ENCODE measurements at regions of chr1 and their contacts with region 1.

Region 1: DNA sequence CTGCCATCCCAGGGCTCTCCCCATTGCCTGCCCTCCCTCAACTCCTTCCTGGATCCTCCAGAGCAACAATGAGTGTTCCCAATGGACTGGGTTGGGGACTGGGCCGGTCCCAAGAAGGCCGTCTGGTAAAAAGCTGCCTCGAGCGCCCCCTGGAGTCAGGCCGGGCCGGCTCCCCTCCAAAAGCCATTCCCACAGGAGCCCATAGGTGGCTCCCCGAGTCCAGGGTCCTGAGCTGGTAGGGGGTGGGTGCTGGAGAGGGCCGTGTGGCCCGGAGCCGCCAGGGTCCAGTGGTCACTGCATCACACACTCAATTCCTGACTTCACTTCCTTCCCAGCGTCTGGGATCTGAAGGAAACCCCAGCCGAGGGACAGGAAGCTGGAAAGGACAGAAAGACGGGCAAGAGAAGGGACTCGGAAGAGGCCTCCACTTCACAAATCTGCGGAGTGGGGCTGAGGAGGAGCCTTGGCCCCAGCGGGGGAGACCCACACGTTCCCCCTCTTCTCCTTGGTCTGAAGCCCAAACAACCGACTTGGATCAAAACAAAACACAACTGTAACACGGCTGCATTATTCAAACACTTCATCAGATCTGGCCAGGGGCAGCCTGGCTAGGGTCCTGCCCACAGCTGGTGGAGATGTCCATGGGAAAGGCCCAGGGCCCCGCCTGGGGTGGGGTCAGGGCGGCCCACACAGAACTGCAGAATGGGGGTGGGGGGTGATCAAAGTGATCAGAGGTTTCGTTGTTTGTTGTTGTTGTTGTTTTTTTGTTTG is 10.9 kb upstream of the ALDH4A1 start:
- DNase-seq: peak; percentile 46 to 84 (median 73)
- ATAC-seq: peak; percentile 89
- H3K4me3 ChIP-seq: no peak overlapping the region
- H3K4me3 Mint-ChIP-seq: no peak overlapping the region
- H3K27ac ChIP-seq: no peak overlapping the region
- H3K27ac Mint-ChIP-seq: peak overlapping the region; percentile 22
- H3K4me1 ChIP-seq: peaks cover 5% of the 10 kb centered on the region
- H3K4me1 Mint-ChIP-seq: peaks cover 8% of the 10 kb centered on the region
- H3K27me3 ChIP-seq: no peaks in the 10 kb centered on the region
- H3K27me3 Mint-ChIP-seq: no peaks in the 10 kb centered on the region
- CTCF ChIP-seq: peak; percentile 92

Region 2: GRCh38 chr1:18854331-18855025 is 58.8 kb before region 1 on chr1:
- CTCF ChIA-PET with region 1: no interaction called
- POLR2A ChIA-PET with region 1: no interaction called
- intact Hi-C with region 1: no loop called
- DNase-seq: no peak
- ATAC-seq: no peak
- H3K4me3 ChIP-seq: no peak overlapping the region
- H3K4me3 Mint-ChIP-seq: no peak overlapping the region
- H3K27ac ChIP-seq: no peak overlapping the region
- H3K27ac Mint-ChIP-seq: no peak overlapping the region
- H3K4me1 ChIP-seq: no peaks in the 10 kb centered on the region
- H3K4me1 Mint-ChIP-seq: no peaks in the 10 kb centered on the region
- H3K27me3 ChIP-seq: no peaks in the 10 kb centered on the region
- H3K27me3 Mint-ChIP-seq: peaks cover 10% of the 10 kb centered on the region
- CTCF ChIP-seq: no peak

Region 3: GRCh38 chr1:18883636-18884418 is 29.4 kb before region 1 on chr1:
- CTCF ChIA-PET with region 1: interaction called, 116 read pairs
- POLR2A ChIA-PET with region 1: no interaction called
- intact Hi-C with region 1: no loop called
- DNase-seq: peak; percentile 51 to 82 (median 76)
- ATAC-seq: peak; percentile 97
- H3K4me3 ChIP-seq: no peak overlapping the region
- H3K4me3 Mint-ChIP-seq: no peak overlapping the region
- H3K27ac ChIP-seq: no peak overlapping the region
- H3K27ac Mint-ChIP-seq: no peak overlapping the region
- H3K4me1 ChIP-seq: no peaks in the 10 kb centered on the region
- H3K4me1 Mint-ChIP-seq: no peaks in the 10 kb centered on the region
- H3K27me3 ChIP-seq: no peaks in the 10 kb centered on the region
- H3K27me3 Mint-ChIP-seq: no peaks in the 10 kb centered on the region
- CTCF ChIP-seq: peak; percentile 86

Region 4: DNA sequence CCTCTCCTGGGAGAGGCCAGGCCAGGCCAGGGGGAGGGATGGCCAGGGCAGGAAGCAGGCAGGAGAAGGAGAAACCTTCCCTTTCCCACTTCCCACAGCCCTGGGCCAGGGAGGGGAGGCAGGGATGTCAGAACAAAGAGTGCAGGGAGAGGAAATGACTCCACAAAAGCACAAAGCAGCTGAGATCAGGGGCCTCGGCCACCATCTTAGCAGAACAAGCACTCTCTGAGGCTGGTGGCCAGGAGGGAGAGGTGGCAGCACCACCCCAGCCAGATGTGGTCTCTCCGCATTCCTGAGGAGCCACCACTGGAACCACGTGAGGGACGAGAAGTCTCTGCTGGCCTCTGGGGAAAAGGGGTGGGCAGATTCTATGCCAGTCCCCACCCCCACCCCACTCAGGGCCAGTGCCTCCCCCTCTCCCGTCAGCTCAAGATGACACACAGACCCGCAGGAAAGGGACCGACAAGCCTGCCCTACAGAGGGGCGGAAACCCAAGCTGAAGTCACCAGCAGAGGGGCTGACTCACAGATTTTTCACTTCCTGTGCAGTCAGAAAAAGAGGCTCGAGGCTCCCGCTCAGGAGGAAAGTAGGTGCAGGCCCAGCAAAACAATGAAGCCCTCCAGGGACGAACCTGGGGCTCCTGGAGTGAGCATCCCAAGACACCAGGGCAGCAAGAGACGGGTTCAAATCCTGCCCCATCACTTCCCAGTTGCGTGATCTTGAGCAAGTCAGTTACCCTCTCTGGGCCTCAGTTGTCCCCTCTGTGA is 13.2 kb after region 1 on chr1:
- CTCF ChIA-PET with region 1: interaction called, 82 read pairs
- POLR2A ChIA-PET with region 1: interaction called, 6 read pairs
- intact Hi-C with region 1: loop called in 1 of 2 experiments (anchors 2 kb)
- DNase-seq: peak; percentile 59 to 93 (median 84)
- ATAC-seq: peak; percentile 83
- H3K4me3 ChIP-seq: peak overlapping the region; percentile 52 to 63
- H3K4me3 Mint-ChIP-seq: peak overlapping the region; percentile 75
- H3K27ac ChIP-seq: peak overlapping the region; percentile 64 to 82
- H3K27ac Mint-ChIP-seq: peak overlapping the region; percentile 96
- H3K4me1 ChIP-seq: peaks cover 88% of the 10 kb centered on the region
- H3K4me1 Mint-ChIP-seq: peaks cover 85% of the 10 kb centered on the region
- H3K27me3 ChIP-seq: no peaks in the 10 kb centered on the region
- H3K27me3 Mint-ChIP-seq: no peaks in the 10 kb centered on the region
- CTCF ChIP-seq: no peak

Region 5: DNA sequence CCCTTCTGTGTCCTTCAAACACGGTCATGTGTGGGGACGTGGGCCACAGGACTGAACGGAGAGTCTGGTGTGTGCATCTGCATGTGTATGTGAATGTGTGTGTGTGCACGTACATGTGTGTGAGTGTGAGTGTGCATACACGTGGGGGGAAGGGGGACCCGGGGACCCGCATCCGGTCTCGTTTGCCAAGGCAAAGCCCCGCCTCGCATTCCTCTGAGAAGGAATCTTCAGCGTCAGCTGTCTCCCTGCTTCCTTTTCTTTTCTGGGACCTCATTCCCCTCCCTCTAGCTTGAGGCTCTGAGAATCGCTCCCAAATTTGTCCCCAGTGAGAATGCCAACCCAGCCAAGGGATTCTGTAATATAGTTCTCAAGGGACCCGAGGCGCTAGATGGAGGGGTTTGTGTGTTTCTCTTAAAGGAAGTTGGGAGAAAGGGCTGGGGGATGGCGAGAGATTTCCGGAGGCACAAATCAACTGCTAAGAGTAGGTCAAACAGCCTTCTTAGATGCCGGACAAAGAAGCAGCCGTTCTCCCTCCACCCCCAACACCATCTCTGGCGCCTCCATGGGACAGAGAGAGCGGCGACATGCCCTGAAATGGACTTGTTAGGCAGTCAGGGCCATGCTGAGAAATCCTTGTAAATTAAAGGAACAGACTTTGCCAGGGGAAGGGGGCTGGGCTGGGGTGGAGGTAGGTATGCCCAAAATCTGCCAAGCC is 36.6 kb after region 1 on chr1:
- CTCF ChIA-PET with region 1: interaction called, 15 read pairs
- POLR2A ChIA-PET with region 1: no interaction called
- intact Hi-C with region 1: no loop called
- DNase-seq: peak in 3 of 9 experiments; percentile 35 to 48 (median 37)
- ATAC-seq: no peak
- H3K4me3 ChIP-seq: peak overlapping the region; percentile 20 to 23
- H3K4me3 Mint-ChIP-seq: peak overlapping the region; percentile 82
- H3K27ac ChIP-seq: peak overlapping the region; percentile 95 to 96
- H3K27ac Mint-ChIP-seq: peak overlapping the region; percentile 98
- H3K4me1 ChIP-seq: peaks cover 98% of the 10 kb centered on the region
- H3K4me1 Mint-ChIP-seq: peaks cover 96% of the 10 kb centered on the region
- H3K27me3 ChIP-seq: no peaks in the 10 kb centered on the region
- H3K27me3 Mint-ChIP-seq: no peaks in the 10 kb centered on the region
- CTCF ChIP-seq: no peak

Region 6: GRCh38 chr1:18972531-18972930 is 59.3 kb after region 1 on chr1:
- CTCF ChIA-PET with region 1: interaction called, 425 read pairs
- POLR2A ChIA-PET with region 1: interaction called, 3 read pairs
- intact Hi-C with region 1: loop called in 1 of 2 experiments (anchors 1 kb)
- DNase-seq: peak in 4 of 9 experiments; percentile 27 to 73 (median 52)
- ATAC-seq: peak; percentile 61
- H3K4me3 ChIP-seq: no peak overlapping the region
- H3K4me3 Mint-ChIP-seq: no peak overlapping the region
- H3K27ac ChIP-seq: no peak overlapping the region
- H3K27ac Mint-ChIP-seq: no peak overlapping the region
- H3K4me1 ChIP-seq: peaks cover 3% of the 10 kb centered on the region
- H3K4me1 Mint-ChIP-seq: peaks cover 4% of the 10 kb centered on the region
- H3K27me3 ChIP-seq: no peaks in the 10 kb centered on the region
- H3K27me3 Mint-ChIP-seq: peaks cover 7% of the 10 kb centered on the region
- CTCF ChIP-seq: peak; percentile 59